GM10248 (cell line): ENCODE measurements at regions of chr9 and their contacts with region 1.

Region 1: DNA sequence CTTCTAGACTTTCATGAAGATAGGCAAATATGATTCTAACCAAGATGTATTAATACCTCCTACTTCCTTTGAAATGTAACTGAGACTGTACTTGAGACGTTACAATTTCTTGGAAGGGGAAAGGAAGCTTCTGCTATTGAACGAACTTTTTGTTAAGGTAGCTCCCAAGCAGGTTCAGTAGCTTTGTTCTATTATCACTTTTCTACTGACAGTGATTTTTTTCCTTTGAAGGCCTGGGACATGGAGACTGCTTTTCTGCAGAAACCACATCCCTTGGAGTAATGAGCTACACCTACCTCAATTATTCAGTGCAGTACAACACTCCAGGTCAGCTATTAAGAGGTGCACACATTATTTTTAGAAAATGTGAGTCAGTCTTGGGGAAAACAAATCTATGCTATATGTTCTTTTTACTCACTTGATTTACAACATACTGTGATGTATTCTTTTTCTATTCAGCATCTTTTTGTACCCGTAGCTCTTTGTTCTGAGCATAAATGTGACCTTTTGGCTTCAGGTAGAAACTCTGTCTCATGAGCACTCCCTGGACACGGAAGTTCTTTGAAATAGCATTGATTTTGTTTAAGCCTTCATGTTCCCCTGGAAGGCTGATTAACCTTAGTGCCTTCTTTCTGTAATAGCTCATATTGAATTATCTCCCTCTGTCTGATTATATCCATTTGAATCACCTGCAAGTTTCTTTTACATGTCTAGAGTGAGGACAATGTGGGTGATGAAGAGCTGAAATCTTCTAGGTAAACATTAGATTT is 56.5 kb upstream of the CDKN2B start:
- DNase-seq: no peak
- CTCF ChIP-seq: no peak

Region 2: GRCh38 chr9:21806644-21807043 is 259.0 kb before region 1 on chr9:
- CTCF ChIA-PET with region 1: no interaction called
- POLR2A ChIA-PET with region 1: no interaction called
- DNase-seq: no peak
- CTCF ChIP-seq: no peak

Region 3: DNA sequence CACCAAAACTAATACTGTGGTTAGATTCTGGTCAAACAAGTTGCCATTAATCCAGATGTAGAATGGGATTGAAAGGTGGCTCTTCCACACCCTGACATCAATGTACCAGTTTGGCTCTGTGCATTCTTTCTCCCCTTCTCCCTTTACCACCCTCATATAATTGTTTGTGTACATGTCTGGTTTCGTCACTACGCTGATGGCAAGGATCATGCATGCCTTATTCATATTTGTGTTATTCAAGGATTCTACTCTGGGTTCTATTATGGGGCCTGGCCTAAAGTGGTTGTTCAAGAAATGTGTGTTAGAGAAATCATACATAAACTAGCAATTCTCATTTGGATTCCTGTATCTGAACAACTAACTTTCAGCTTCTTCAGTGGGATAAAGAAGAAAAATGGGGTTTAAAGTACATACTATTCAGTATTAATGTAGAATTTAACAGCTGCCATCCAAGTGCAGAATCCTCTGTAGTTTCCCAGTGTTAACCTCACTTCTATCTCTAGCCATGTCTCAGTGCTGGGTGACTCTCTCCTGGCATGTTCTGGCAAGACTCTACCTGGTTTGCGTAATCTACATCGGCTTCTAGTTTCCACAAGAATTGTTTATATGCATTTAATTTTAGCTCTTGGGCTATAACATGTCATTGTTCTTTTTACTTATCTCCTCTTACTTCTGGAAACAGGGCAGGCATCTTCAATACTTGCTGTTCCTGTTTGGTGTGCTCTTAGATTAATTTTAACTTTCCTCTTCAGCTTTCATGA is 28.6 kb before region 1 on chr9:
- CTCF ChIA-PET with region 1: no interaction called
- POLR2A ChIA-PET with region 1: no interaction called
- DNase-seq: no peak
- CTCF ChIP-seq: no peak

Region 4: DNA sequence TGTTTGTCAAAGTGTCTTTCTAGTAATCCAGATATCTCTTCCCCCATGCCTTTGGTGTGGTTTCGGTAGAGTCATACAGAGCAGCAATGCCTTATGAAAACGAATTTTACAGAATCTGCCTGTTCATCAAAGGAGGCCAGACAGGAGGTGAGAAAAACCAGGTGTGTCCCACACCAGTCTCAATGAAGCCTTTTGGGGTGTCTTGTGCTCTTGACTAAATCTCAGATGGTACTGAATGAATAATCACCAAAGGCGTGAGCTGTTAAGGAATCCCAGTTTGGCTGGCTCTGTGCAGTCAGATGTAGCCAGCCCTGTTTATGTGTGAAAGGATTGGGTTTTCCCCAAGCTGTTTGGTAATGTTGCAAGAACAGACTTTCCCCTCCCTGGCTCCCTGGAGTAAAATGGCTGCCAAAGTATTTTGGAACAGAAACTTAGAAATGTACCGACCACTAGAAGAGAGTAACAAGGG is 14.3 kb after region 1 on chr9:
- CTCF ChIA-PET with region 1: interaction called, 15 read pairs
- POLR2A ChIA-PET with region 1: no interaction called
- DNase-seq: peak; percentile 10
- CTCF ChIP-seq: no peak

Region 5: DNA sequence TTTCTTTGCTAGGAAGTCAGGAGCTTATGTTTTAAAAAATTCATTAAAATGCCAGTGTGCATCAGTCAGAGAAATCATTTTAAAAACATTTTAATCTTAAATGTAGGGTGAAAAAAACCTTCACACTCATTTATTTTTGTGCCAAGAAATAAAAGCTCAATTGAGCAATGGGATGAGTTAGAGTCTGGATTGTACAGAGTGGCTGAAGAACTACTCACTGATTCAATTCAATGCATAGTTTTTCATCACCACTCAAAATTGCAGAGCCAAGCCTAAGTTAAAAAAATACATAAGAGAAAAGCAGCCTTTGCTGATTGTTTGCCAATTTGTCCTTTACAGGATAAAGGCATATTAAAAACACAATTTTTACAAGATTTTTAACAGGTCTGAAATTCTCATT is 212.8 kb after region 1 on chr9:
- CTCF ChIA-PET with region 1: no interaction called
- POLR2A ChIA-PET with region 1: no interaction called
- DNase-seq: no peak
- CTCF ChIP-seq: no peak